Activated T-helper 2 cell treated with anti-CD3 and anti-CD28 coated beads, Interferon-gamma antibody, Interleukin-2, Interleukin-4, amounts not matched to agents 10 μg/mL and 5 μg/mL and 100 μg/mL, durations not matched to agents 14 hours and 24 hours and 36 hours (primary cell): ENCODE measurements at regions of chr7 and their contacts with region 1.

Region 1: DNA sequence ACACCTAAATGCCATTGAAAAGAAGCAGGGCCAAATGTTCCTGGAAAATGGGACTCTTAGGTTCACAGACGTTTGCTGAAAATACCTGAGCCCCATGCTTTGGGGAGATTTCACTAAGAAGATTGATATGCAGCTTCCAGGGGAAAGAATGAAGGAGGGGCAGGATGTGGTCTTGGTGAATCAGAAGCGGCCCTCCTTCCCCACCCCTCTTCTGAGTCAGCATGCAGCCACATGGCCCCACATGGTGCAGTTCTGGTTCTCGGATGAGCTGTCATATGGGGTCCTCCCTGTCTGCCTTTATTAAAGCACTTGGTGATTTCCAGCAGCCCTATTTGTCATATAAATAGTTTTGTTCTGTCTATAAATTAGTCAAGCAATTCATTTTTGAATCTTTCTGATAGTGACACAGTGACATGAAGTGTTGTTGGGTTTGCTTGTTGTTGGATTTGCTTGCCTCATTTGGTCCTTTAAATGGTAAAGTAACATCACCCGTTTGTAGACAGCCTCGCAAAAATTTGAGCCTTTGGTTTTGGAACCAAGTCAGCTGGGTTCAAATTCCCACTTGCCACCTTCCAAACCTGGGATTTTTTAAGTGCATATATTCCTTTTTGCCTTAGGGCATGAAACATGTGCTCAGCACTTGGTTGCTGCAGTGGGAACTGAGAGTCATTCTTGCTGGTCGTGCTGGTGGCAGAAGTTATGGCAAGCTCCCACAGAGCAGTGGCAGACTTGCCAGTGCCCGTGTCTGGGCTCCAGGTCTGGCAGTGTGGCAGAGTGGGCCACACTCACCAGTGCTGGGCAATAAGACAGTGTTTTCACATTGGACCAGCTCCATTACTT is 68.1 kb upstream of the CDK6 start:
- DNase-seq: peak; percentile 81
- H3K4me3 Mint-ChIP-seq: peak overlapping the region; percentile 20
- H3K27ac Mint-ChIP-seq: peak overlapping the region; percentile 92
- H3K4me1 Mint-ChIP-seq: peaks cover 21% of the 10 kb centered on the region
- H3K27me3 Mint-ChIP-seq: no peaks in the 10 kb centered on the region

Region 2: GRCh38 chr7:92708111-92709042 is 196.1 kb before region 1 on chr7:
- intact Hi-C with region 1: loop called (anchors 1 kb)
- DNase-seq: no peak
- H3K4me3 Mint-ChIP-seq: no peak overlapping the region
- H3K27ac Mint-ChIP-seq: peak overlapping the region; percentile 64
- H3K4me1 Mint-ChIP-seq: peaks cover 43% of the 10 kb centered on the region
- H3K27me3 Mint-ChIP-seq: no peaks in the 10 kb centered on the region

Region 3: GRCh38 chr7:92797693-92798092 is 106.8 kb before region 1 on chr7:
- intact Hi-C with region 1: no loop called
- DNase-seq: no peak
- H3K4me3 Mint-ChIP-seq: no peak overlapping the region
- H3K27ac Mint-ChIP-seq: no peak overlapping the region
- H3K4me1 Mint-ChIP-seq: peaks cover 36% of the 10 kb centered on the region
- H3K27me3 Mint-ChIP-seq: no peaks in the 10 kb centered on the region

Region 4: DNA sequence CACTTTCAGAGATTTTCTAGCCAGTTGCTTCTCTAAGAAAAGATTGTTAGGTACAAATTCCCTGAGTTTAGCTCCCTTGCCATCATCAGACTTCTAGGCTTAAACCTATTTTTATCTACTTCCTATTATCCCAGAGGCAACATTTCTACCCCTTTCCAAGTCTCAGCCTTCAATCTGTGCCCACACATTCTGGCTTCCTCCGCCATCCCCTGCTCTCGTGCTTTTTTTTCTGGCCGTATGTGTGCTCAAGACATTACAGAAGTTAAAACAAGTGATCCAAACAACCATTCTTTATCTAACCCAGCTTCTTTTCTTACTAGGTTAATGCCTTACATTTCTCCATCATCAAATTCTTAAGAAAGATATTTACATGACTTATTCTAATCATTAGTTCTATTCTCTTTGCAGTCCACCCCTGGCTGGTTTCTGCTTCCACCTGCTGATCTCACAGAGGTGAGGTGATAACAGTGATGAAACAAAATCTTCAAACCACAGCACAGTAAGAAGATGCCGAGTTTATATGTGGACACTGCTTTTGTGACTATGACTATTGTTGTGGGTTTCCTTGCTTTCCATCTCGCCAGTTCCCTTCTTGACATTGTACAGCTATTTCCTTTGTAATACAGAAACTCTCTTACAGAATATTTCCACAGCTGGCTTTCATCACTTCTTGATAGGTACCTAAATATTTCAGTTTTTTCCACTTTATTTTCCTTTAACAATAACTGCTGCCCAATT is 49.8 kb before region 1 on chr7:
- intact Hi-C with region 1: loop called (anchors 2 kb)
- DNase-seq: no peak
- H3K4me3 Mint-ChIP-seq: no peak overlapping the region
- H3K27ac Mint-ChIP-seq: peak overlapping the region; percentile 83
- H3K4me1 Mint-ChIP-seq: peaks cover 17% of the 10 kb centered on the region
- H3K27me3 Mint-ChIP-seq: no peaks in the 10 kb centered on the region

Region 5: GRCh38 chr7:92953657-92954056 is 49.1 kb after region 1 on chr7:
- intact Hi-C with region 1: loop called (anchors 1 kb)
- DNase-seq: no peak
- H3K4me3 Mint-ChIP-seq: no peak overlapping the region
- H3K27ac Mint-ChIP-seq: peak overlapping the region; percentile 83
- H3K4me1 Mint-ChIP-seq: peaks cover 35% of the 10 kb centered on the region
- H3K27me3 Mint-ChIP-seq: no peaks in the 10 kb centered on the region

Region 6: DNA sequence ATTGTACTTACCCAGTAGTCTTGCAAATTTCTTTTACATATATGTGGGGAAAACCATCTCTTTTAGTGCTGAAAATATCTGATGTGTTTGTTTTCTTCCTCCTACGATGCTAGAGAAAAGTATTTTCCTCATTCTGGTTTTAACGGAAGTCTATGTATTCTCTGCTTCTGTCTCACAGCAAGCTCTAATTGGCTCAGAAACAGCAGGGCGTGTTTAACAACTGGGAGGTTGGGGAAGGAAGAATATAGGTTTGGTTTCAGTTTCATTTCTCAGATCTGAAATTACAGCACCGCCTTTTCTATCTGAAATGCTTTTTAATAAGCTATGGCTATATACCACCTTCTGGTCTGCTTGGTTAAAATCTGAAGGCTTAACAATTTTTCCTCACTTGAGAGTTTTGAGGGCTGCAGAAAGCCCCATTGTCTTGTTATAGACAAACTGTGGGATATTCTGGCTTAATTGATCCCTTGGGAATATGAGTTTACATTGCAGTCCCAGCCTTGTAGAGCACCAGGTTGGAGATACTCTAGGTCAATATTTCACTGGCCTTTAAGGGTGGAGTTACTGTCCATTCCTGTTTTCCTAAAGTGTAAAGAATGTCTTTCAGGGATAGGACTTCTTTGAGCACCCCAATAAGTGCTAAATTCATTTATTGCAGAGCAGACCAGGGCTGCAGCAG is 213.5 kb after region 1 on chr7 and contains the start of gene SAMD9:
- intact Hi-C with region 1: loop called (anchors 1 kb)
- DNase-seq: peak; percentile 58
- H3K4me3 Mint-ChIP-seq: peak within 1 kb of the TSS; percentile 85
- H3K27ac Mint-ChIP-seq: peak within 1 kb of the TSS; percentile 90
- H3K4me1 Mint-ChIP-seq: peaks cover 38% of the 10 kb centered on the region
- H3K27me3 Mint-ChIP-seq: no peaks in the 10 kb centered on the region
- total RNA-seq, gene SAMD9: 9.3 and 9.4 TPM in 2 replicates